Activated CD4-positive, alpha-beta T cell treated with anti-CD3 and anti-CD28 coated beads for 36 hours (primary cell): ENCODE measurements at regions of chr3 and their contacts with region 1.

Region 1: GRCh38 chr3:101779047-101779821 is at the start of gene NXPE3:
- DNase-seq: peak; percentile 97
- ATAC-seq: peak; percentile 92
- H3K4me3 Mint-ChIP-seq: peak within 1 kb of the TSS; percentile 91
- H3K27ac Mint-ChIP-seq: peak within 1 kb of the TSS; percentile 96
- H3K4me1 Mint-ChIP-seq: peaks cover 49% of the 10 kb centered on the region
- H3K27me3 Mint-ChIP-seq: no peaks in the 10 kb centered on the region
- total RNA-seq, gene NXPE3: 12.8 to 18.5 TPM

Region 2: DNA sequence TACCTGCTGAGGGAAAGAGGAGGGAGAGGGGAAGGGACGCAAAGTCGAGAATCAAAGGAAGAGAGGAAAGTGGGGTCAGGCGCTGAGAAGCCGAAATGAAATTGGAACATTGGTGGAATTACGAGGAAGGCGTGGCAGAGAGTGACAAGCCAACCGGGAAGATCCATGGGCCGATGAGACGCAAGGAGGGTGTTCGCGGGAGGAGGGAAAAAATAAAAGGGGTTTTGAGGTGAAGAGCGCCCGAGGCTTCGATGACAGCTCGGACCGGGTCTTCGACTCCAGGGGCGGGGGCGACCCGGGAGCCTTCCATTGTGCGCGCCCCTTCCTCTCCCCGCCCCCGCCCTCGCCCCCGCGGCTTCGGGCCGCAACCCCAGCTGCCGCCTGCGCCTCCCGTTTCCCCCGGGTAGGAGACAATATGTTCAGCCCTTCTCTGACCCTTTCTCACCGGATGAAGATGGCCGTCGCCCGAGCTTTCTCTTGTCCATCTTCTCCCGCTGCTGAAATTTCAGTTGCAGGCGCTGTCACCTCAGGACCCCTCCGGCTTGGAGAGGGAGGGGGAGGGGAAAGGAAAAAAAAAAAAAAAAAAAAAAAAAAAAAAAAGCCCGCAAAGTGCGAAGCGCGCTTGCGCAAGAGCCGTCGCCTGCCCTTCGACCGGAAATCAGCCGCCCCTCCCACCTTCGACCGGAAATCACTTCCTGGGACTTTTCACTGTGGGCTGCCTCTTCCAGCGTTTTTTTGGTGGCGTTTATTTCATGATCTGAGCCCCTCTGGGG is 266.4 kb before region 1 on chr3 and contains the start of gene SENP7:
- CTCF ChIA-PET with region 1: no interaction called
- POLR2A ChIA-PET with region 1: no interaction called
- intact Hi-C with region 1: loop called in 1 of 2 experiments (anchors 2 kb)
- DNase-seq: peak; percentile 88
- ATAC-seq: peak; percentile 49
- H3K4me3 Mint-ChIP-seq: peak within 1 kb of the TSS; percentile 85
- H3K27ac Mint-ChIP-seq: peak within 1 kb of the TSS; percentile 96
- H3K4me1 Mint-ChIP-seq: peaks cover 53% of the 10 kb centered on the region
- H3K27me3 Mint-ChIP-seq: no peaks in the 10 kb centered on the region
- total RNA-seq, gene SENP7: 12.3 to 12.9 TPM

Region 3: DNA sequence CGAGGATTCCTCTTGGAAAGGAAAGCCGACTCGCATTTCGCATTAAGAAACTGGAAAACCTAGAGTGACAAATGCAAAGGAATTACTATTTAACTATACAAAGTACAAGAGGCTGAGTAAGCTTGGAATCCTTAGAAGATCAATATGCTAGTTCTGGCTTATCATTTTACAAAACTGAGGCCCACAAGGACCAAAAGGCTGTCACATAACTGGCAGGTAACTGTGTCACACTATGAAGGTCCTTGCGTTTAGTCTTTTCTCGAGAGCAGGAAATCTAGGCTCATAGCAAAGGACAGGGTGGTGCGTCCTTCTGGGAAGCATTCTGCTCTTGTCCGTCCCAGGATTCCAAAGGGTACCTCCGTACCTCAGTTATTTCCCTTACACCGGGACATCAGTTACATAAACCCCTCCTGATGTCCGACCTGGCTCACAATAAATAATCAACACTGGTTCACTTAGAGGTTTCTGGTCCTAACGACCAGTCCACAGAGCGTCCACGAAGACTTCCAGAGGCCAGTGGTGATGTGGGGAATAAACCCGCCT is 93.3 kb before region 1 on chr3:
- CTCF ChIA-PET with region 1: interaction called, 3 read pairs
- POLR2A ChIA-PET with region 1: interaction called, 6 read pairs
- intact Hi-C with region 1: loop called (anchors 1 to 2 kb)
- DNase-seq: no peak
- ATAC-seq: no peak
- H3K4me3 Mint-ChIP-seq: peak overlapping the region; percentile 100
- H3K27ac Mint-ChIP-seq: peak overlapping the region; percentile 99
- H3K4me1 Mint-ChIP-seq: peaks cover 45% of the 10 kb centered on the region
- H3K27me3 Mint-ChIP-seq: no peaks in the 10 kb centered on the region

Region 4: GRCh38 chr3:102142379-102143060 is 363.3 kb after region 1 on chr3:
- CTCF ChIA-PET with region 1: no interaction called
- POLR2A ChIA-PET with region 1: interaction called, 12 read pairs
- intact Hi-C with region 1: no loop called
- DNase-seq: no peak
- ATAC-seq: no peak
- H3K4me3 Mint-ChIP-seq: no peak overlapping the region
- H3K27ac Mint-ChIP-seq: no peak overlapping the region
- H3K4me1 Mint-ChIP-seq: no peaks in the 10 kb centered on the region
- H3K27me3 Mint-ChIP-seq: peaks cover 2% of the 10 kb centered on the region